CD14-positive monocyte (primary cell): ENCODE measurements at regions of chr15 and their contacts with region 1.

Region 1: DNA sequence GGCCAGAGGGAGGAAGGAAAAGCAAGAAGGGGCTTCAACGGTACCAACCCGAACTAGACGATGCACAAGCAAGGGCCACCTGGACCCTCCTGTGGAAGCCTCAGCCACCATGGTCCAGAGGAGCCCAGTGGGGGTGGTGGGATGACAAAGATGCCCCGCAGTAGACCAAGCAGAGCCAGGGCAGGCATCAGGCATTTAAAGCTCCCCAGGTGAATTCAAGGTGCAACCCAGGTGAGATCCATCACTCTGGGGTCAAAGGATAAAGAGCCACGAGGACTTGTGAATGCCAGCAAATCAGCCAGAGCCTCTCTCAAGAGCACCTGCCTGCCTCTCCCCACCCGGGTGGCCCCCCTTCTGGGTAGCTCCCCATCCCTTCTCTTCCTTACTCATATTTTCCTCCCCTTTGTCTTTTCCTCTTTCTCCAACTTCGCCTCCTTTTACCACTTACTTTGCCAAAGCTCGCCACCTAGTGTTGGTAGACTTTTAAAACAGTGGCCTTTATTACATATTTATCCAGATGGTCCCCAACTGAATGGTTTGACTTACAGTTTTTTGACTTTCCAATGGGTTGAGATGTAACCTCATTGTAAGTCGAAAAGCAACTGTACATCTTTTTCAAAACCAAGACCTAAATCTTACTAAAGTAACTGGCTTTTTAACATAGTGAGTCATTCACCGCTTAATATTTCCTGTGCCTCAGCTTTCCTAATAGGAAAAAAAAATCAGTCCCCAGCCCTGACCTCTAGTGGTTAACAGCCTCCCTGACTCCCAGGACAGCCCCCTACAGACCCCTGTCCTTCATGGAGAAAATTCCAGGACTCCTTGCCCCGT is 18.8 kb downstream of the PLA2G4F start:
- DNase-seq: peak; percentile 24 to 40 (median 39)
- H3K4me3 ChIP-seq: no peak overlapping the region
- H3K4me3 Mint-ChIP-seq: no peak overlapping the region
- H3K27ac ChIP-seq: no peak overlapping the region
- H3K27ac Mint-ChIP-seq: peak overlapping the region in 1 of 7 donors; percentile 57
- H3K4me1 ChIP-seq: no peaks in the 10 kb centered on the region
- H3K4me1 Mint-ChIP-seq: peaks cover 5% of the 10 kb centered on the region
- H3K27me3 ChIP-seq: no peaks in the 10 kb centered on the region
- H3K27me3 Mint-ChIP-seq: peaks cover 0 to 2% (median 0%) of the 10 kb centered on the region in 3 donors
- CTCF ChIP-seq: peak; percentile 68

Region 2: DNA sequence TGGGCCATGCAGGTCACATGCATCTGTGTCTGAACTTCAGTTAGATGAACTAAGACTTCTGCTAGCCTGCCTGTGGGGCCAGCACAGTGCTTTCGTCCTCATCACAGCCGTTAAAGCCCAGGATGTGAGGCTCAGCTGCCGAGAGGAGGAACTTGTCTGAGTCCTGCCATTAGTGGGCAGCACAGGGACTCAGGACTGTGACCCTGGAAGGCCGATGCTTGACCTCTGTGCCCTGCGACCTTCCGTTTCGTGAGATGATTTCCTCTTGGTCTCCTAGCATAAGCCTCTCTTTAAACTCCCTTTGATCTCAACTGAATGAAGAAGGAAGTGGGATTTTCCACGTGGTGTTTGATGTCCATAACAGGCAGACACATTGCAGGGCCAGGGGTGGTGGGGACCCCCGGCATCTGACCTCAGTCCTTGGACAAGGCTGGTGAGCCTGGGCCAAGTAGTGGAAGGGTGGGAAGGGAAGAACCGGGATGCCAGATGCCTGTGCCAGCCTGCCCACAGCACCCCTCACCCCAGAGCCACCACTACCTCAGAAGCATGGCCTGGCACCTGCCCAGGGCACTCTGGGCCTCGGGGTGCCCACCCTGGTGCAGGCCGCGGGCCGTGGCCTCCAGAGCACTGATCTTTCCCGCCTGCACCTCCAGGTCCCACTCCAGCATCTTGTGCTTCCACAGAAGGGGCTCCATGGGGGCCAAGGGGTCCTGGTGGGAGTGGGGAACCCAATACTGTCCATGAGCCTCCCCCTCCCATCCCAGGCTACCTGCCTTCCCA is 277.4 kb before region 1 on chr15:
- intact Hi-C with region 1: no loop called
- DNase-seq: peak; percentile 51 to 63 (median 63)
- H3K4me3 ChIP-seq: no peak overlapping the region
- H3K4me3 Mint-ChIP-seq: no peak overlapping the region
- H3K27ac ChIP-seq: no peak overlapping the region
- H3K27ac Mint-ChIP-seq: peak overlapping the region in 3 of 7 donors; percentile 18 to 57 (median 30)
- H3K4me1 ChIP-seq: peaks cover 3 to 9% of the 10 kb centered on the region in 2 donors
- H3K4me1 Mint-ChIP-seq: peaks cover 12% of the 10 kb centered on the region
- H3K27me3 ChIP-seq: no peaks in the 10 kb centered on the region
- H3K27me3 Mint-ChIP-seq: peaks cover 0 to 4% (median 1%) of the 10 kb centered on the region in 3 donors
- CTCF ChIP-seq: peak; percentile 43

Region 3: GRCh38 chr15:42066764-42067415 is 70.8 kb before region 1 on chr15:
- intact Hi-C with region 1: loop called (anchors 2 kb)
- DNase-seq: no peak
- H3K4me3 ChIP-seq: no peak overlapping the region
- H3K4me3 Mint-ChIP-seq: no peak overlapping the region
- H3K27ac ChIP-seq: no peak overlapping the region
- H3K27ac Mint-ChIP-seq: no peak overlapping the region
- H3K4me1 ChIP-seq: no peaks in the 10 kb centered on the region
- H3K4me1 Mint-ChIP-seq: peaks cover 6% of the 10 kb centered on the region
- H3K27me3 ChIP-seq: no peaks in the 10 kb centered on the region
- H3K27me3 Mint-ChIP-seq: peaks cover 0 to 12% (median 2%) of the 10 kb centered on the region in 3 donors
- CTCF ChIP-seq: peak; percentile 28